HEK293T (cell line): ENCODE measurements at regions of chr18 and their contacts with region 1.

Region 1: GRCh38 chr18:47150029-47150823 is at the start of gene HDHD2:
- DNase-seq: peak; percentile 73

Region 2: DNA sequence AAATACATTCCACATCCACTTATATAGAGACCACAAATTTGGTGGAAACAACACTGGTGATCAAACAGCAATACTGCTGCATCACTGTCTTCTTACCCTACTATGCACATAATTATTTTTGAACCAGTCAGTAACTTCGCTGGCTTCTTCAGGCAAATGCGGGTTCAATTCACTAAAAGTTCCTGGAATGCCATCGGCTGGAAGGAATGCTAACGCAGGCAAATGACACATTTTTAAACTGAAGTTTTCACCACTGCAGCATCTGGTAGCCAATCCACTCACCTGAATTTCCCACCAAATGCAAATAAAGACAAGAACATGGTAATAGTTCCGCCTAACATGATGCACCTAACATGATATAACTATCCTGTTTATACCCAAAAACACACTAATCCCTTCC is 10.0 kb after region 1 on chr18:
- CTCF ChIA-PET with region 1: no interaction called
- POLR2A ChIA-PET with region 1: interaction called, 14 read pairs
- DNase-seq: no peak

Region 3: DNA sequence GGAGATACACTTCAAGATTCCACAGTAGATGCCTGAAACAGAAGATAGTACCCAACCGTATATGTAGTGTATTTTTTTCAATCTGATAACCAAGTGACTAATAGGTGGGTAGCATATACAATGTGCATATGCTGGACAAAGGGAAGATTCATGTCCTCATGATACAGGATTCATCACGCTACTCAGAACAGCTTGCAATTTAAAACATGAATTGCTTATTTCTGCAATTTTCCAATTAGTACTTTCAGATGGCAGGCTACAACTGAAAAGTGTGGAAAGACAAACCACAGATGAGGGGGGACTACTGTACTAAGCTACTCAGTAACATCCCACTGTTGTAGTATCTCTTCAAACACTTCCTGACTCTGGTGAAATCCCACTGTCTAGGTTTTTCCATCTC is 22.2 kb after region 1 on chr18:
- CTCF ChIA-PET with region 1: no interaction called
- POLR2A ChIA-PET with region 1: interaction called, 12 read pairs
- DNase-seq: no peak

Region 4: DNA sequence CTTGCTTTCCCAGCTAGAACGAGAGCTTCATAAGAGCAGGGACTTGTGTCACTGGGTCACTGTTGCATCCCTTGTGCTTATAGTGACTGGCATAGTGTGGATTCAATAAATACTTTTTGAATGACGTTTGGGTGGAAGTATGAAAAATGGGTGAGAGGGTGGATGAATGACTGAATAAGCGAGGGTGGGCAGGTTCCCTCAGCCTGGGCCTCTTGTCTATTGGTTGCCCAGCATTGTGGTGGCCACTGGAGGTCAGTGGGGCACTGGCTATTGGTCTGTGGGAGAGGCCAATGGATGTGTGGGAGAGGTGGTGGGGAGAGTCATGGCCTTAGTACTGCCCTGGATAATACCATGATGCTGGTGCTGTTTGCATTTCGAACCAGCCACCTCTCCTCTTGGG is 195.1 kb after region 1 on chr18:
- CTCF ChIA-PET with region 1: no interaction called
- POLR2A ChIA-PET with region 1: no interaction called
- DNase-seq: no peak